MCF 10A (cell line): ENCODE measurements at regions of chr4 and their contacts with region 1.

Region 1: GRCh38 chr4:74098450-74098994 is 473 bp downstream of the CXCL2 start:
- DNase-seq: no peak
- H3K4me3 Mint-ChIP-seq: peak overlapping the region; percentile 84
- H3K27ac Mint-ChIP-seq: peak overlapping the region; percentile 88
- H3K4me1 Mint-ChIP-seq: peaks cover 34% of the 10 kb centered on the region
- H3K27me3 Mint-ChIP-seq: no peaks in the 10 kb centered on the region
- CTCF ChIP-seq: no peak

Region 2: GRCh38 chr4:73662709-73663546 is 435.6 kb before region 1 on chr4:
- CTCF ChIA-PET with region 1: interaction called, 4 read pairs
- POLR2A ChIA-PET with region 1: interaction called, 3 read pairs
- intact Hi-C with region 1: loop called (anchors 1 kb)
- DNase-seq: peak; percentile 70
- H3K4me3 Mint-ChIP-seq: no peak overlapping the region
- H3K27ac Mint-ChIP-seq: peak overlapping the region; percentile 23
- H3K4me1 Mint-ChIP-seq: peaks cover 7% of the 10 kb centered on the region
- H3K27me3 Mint-ChIP-seq: no peaks in the 10 kb centered on the region
- CTCF ChIP-seq: peak; percentile 64

Region 3: DNA sequence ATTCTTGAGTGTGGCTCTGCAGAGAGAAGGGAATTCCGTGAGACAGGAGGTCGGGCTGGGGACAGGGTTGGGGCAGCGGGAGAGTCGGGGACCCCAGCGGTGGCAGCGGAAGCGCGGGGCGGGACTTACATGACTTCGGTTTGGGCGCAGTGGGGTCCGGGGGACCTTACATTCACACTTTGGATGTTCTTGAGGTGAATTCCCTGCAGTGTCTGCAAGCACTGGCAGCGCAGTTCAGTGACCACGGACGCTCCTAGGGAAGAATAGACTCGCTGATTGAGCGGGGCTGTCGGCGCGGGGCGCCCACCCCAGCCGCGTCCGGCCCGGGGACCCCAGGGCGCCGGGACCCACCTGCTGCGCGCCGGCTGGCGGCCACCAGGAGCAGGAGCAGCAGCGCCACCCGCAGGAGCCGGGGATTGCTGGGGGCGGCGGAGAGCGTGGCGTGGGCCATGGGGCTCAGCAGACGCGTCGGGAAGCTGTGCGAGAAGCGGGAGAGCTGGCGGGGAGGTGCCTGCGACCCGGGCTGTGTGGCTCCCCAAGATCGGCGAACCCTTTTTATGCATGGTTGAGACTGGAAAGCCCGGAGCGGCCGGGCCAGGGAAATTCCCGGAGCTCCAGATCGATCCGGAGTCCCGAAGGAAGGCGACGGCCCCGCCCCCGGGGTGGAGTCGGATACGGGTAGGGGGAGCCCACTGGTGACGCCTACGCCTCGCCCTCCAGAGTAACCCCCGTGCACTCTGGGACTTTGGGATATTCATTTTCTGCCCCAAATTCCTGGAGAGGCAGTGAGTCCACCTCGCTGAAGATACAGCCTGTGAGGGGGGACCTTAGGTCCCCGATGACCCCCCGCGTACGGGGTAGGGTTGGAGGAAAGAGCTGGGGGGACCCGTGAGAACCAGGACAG is 60.1 kb before region 1 on chr4 and contains the start of gene CXCL3:
- CTCF ChIA-PET with region 1: interaction called, 19 read pairs
- POLR2A ChIA-PET with region 1: interaction called, 28 read pairs
- intact Hi-C with region 1: loop called (anchors 2 kb)
- DNase-seq: peak; percentile 64
- H3K4me3 Mint-ChIP-seq: peak within 1 kb of the TSS; percentile 86
- H3K27ac Mint-ChIP-seq: peak within 1 kb of the TSS; percentile 81
- H3K4me1 Mint-ChIP-seq: peaks cover 37% of the 10 kb centered on the region
- H3K27me3 Mint-ChIP-seq: no peaks in the 10 kb centered on the region
- CTCF ChIP-seq: peak; percentile 40
- total RNA-seq, gene CXCL3: 9.2 and 9.8 TPM in 2 replicates

Region 4: DNA sequence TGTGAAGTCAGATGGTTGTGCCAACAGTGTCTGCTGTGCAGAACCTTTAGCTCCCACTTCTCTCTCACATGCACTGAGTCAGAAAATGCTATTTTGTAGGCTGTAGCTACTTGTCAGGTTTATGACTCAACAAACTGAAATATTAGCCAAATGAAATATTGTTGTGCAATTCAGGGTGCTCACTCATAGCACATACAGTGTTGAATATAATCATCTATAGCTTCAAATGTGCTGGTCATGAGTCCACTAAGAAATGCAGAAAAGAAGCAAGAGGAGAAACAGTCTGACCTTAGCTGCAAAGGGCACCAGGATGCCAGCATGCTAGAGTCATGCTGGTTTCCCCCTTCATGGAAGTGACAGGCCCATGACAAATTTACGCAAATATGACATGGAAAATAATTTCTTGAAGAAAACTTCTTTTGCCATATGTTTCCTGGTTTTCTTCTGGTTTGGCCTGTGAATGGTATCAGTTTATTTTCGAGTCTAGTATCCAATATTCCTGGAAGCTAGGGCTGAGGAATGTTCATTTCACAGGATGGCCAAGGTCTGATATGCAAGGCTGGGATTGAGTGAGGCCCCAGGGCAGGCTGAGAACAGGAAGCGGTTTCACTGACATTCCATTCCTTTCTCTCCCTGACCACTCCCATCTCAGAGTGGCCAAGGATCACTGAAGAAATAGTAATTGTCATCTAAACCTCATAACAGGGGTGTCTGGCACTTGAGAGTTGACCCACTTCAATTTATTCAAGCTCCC is 10.8 kb after region 1 on chr4:
- CTCF ChIA-PET with region 1: interaction called, 52 read pairs
- POLR2A ChIA-PET with region 1: interaction called, 521 read pairs
- intact Hi-C with region 1: loop called (anchors 1 kb)
- DNase-seq: peak; percentile 96
- H3K4me3 Mint-ChIP-seq: peak overlapping the region; percentile 14
- H3K27ac Mint-ChIP-seq: peak overlapping the region; percentile 96
- H3K4me1 Mint-ChIP-seq: peaks cover 55% of the 10 kb centered on the region
- H3K27me3 Mint-ChIP-seq: no peaks in the 10 kb centered on the region
- CTCF ChIP-seq: no peak

Region 5: DNA sequence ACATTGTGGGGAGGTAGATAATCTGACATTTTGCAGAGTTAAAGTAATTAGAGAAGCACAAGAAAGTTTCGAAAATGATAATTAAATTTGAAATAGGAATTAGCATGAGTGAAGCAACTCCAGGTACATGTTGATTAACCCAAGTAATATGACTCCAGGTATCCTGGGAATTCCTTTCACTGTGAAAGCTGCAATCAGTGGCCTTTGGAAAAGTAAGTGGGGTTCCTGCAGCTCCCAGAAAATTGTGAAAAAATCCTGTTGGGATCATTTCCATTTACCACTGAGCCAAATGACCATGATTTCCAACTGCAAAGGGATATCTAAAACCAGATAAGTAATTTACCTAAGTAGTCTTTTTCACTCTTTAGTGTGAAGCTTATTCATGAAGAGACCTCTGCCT is 26.6 kb after region 1 on chr4:
- CTCF ChIA-PET with region 1: no interaction called
- POLR2A ChIA-PET with region 1: interaction called, 15 read pairs
- intact Hi-C with region 1: no loop called
- DNase-seq: no peak
- H3K4me3 Mint-ChIP-seq: peak overlapping the region; percentile 19
- H3K27ac Mint-ChIP-seq: no peak overlapping the region
- H3K4me1 Mint-ChIP-seq: peaks cover 23% of the 10 kb centered on the region
- H3K27me3 Mint-ChIP-seq: no peaks in the 10 kb centered on the region
- CTCF ChIP-seq: no peak

Region 6: DNA sequence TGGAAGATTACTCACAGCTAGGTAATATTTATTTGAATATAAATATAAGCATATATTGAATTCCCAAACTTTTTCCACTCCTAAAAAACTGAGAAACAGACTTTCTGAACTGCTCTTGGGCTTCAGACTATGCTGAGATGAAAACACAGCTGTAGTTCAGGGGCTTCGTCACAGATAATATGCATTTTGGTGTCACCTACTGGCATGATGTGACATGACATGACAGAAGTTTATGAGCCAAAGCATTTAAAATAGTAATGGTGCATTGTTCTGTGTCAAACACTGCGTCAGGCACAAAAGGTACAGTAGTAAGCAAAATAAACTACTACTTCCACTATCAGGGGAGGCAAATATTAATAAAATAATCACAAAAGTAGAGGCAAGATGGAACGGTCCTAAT is 524.5 kb after region 1 on chr4:
- CTCF ChIA-PET with region 1: no interaction called
- POLR2A ChIA-PET with region 1: no interaction called
- intact Hi-C with region 1: no loop called
- DNase-seq: peak; percentile 74
- H3K4me3 Mint-ChIP-seq: no peak overlapping the region
- H3K27ac Mint-ChIP-seq: no peak overlapping the region
- H3K4me1 Mint-ChIP-seq: peaks cover 52% of the 10 kb centered on the region
- H3K27me3 Mint-ChIP-seq: no peaks in the 10 kb centered on the region
- CTCF ChIP-seq: peak; percentile 47